H1 (cell line): ENCODE measurements at regions of chr5 and their contacts with region 1.

Region 1: DNA sequence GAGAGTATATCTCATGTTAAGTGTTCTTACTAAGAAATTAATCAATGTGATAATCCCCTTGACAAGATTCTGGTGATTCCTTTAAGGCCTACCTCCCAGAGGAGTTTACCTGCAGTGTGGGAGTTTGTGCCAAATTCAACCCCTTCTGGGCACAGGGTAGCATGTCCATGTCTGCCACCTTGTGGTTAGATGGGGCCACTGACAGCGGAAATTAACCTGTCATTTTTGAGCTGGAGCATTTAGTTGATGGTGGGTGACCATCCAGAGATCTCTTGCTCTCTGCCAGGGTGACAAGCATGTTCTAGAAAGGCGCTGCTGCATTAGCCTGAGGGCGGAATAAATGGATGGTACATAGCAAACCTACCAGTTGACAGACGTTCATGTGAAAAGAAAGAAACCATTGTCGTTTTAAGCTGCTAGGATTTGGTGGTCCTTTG is 132.2 kb downstream of the FBXO4 start:
- DNase-seq: peak; percentile 31 to 73
- H3K4me3 ChIP-seq: no peak overlapping the region
- H3K27ac ChIP-seq: no peak overlapping the region
- H3K4me1 ChIP-seq: no peaks in the 10 kb centered on the region
- H3K27me3 ChIP-seq: no peaks in the 10 kb centered on the region
- CTCF ChIP-seq: peak; percentile 82 to 88 (median 82)
- EP300 ChIP-seq: no peak
- POLR2A ChIP-seq: no peak
- RAD21 ChIP-seq: peak; percentile 83 to 91

Region 2: DNA sequence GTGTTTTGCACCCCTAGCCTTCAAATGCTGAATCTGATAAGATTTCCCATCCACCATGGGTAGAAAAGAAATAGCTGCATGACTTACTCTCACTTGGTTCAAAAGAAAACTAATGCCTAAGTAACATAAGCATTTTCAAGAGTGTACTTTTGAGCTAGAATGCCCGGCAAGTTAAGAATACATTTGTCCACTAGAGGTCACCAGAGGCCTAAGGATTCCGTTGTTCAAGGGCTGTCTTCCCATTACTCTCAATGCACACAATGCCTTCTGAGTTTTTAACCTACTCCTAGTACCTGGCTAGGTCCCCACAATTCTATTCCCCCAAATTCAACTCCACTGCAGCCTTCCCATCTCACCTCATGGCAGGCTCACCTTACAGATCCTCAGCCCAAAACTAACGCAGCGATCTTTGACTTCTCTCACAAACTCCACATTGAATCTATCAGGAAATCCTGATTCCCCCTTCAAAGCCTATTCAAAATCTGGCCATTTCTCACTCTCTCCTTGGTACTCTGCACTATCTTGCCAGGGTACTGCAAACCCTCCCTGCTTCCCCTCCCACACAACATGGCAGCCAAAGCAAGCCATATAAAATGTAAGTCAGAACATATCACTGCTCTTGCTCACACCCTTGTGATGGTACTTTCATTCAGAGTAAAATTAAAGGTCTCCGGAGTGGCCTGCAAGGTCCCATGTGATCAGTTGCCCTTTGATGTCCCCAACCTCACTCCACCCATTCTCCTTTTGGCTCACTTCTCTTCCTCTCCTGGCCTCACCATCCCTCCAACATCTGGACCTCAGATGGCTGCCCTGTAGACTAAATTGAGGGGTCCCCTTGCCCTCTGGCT is 200.4 kb before region 1 on chr5:
- CTCF ChIA-PET with region 1: interaction called, 56 read pairs
- POLR2A ChIA-PET with region 1: interaction called, 3 read pairs
- DNase-seq: peak in 1 of 2 experiments; percentile 60
- H3K4me3 ChIP-seq: no peak overlapping the region
- H3K27ac ChIP-seq: no peak overlapping the region
- H3K4me1 ChIP-seq: no peaks in the 10 kb centered on the region
- H3K27me3 ChIP-seq: peaks cover 0 to 2% (median 0%) of the 10 kb centered on the region in 4 experiments; a peak in 1 of 7 replicates
- CTCF ChIP-seq: peak in 2 of 3 experiments; percentile 70 to 73; a peak in 3 of 4 replicates
- EP300 ChIP-seq: no peak
- POLR2A ChIP-seq: no peak
- RAD21 ChIP-seq: peak; percentile 90 to 91

Region 3: DNA sequence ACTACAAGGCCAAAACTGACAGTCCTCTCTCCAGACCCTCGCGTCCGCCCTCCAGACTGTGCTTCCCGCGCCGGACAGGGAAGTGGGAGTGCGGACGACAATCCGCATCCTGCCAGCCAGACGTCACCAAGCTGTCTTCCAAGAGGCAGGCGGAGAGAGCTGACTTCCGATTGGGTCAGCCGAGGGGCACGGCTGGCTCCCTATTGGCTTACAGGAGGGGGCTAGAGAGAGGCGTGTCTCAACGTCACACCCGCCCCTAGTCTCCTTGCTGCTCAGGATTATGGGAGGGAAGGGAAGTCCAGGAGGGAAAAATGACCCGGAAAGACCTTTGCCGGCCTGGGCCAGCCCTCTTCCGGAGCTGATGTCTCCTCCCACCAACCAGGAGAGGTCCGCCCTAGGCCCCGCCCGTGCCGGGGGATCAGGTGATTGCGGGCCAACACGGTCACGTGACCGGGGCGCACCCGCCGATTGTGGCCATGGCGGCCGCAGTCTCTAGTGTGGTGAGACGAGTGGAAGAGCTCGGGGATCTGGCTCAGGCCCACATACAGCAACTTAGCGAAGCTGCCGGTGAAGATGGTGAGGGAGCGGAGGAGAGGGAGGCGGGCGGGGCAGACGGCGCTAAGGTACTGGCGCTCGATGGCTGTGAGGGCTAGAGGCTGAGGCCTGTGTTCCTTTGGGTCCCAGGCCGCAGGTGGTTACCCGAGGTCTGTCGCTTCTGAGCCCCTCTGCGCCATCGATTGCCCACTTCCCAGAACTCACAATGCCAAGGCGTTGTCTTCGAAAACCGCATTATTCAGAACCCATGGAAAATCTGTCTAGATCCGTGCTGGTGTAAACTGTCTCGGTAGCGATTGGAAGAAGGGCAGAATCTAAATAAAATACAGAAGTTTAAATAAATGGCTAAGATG is 153.1 kb before region 1 on chr5 and contains the start of gene RIMOC1:
- CTCF ChIA-PET with region 1: interaction called, 12 read pairs
- POLR2A ChIA-PET with region 1: no interaction called
- DNase-seq: peak; percentile 96 to 97
- H3K4me3 ChIP-seq: peak within 1 kb of the TSS; percentile 91 to 98 (median 94)
- H3K27ac ChIP-seq: peak within 1 kb of the TSS; percentile 92
- H3K4me1 ChIP-seq: no peaks in the 10 kb centered on the region; a peak in 1 of 7 replicates
- H3K27me3 ChIP-seq: no peaks in the 10 kb centered on the region; a peak in 1 of 7 replicates
- CTCF ChIP-seq: no peak
- EP300 ChIP-seq: peak in 1 of 2 experiments; percentile 22; a peak in 1 of 3 replicates
- POLR2A ChIP-seq: peak in 1 of 2 experiments; percentile 93; a peak in 2 of 3 replicates
- RAD21 ChIP-seq: no peak
- total RNA-seq, gene RIMOC1: 33.4 and 35.1 TPM in 2 replicates

Region 4: DNA sequence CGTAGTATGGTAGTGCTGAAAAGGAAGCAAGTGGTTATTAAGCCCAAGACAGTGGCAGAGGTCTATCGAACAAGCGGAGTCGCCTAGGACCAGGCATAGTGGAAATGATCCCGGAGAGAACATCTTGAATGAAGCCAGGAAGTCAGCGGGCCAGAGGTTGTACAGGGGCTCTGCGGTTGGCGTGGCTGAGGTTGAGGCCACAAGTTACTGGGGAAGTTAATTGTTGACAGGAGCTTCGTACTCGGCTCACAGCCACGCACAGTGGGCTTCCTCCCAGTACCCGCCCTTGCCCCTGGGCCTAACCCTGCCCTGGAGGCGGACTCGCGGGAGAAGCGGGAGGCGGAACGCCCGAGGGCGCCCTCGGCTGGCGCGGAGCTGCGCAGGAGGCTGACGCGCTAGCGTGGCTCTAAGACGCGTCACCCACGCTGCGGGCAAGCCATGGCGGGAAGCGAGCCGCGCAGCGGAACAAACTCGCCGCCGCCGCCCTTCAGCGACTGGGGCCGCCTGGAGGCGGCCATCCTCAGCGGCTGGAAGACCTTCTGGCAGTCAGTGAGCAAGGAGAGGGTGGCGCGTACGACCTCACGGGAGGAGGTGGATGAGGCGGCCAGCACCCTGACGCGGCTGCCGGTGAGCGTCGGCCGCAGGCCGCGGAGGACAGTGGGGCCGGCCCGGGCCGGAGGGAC is 132.3 kb before region 1 on chr5 and contains the start of gene FBXO4:
- CTCF ChIA-PET with region 1: interaction called, 17 read pairs
- POLR2A ChIA-PET with region 1: no interaction called
- DNase-seq: peak; percentile 15 to 68
- H3K4me3 ChIP-seq: peak within 1 kb of the TSS; percentile 25 to 70 (median 68)
- H3K27ac ChIP-seq: peak within 1 kb of the TSS; percentile 21; the same call in 1 of the 2 replicates
- H3K4me1 ChIP-seq: peaks cover 0 to 3% (median 0%) of the 10 kb centered on the region in 4 experiments; a peak in 2 of 7 replicates
- H3K27me3 ChIP-seq: no peaks in the 10 kb centered on the region
- CTCF ChIP-seq: peak; percentile 44 to 65 (median 57)
- EP300 ChIP-seq: no peak
- POLR2A ChIP-seq: peak; percentile 63 to 80
- RAD21 ChIP-seq: peak in 1 of 2 experiments; percentile 40; a peak in 2 of 4 replicates
- total RNA-seq, gene FBXO4: 0.57 and 0.88 TPM in 2 replicates

Region 5: GRCh38 chr5:41955432-41956024 is 101.7 kb before region 1 on chr5:
- CTCF ChIA-PET with region 1: no interaction called
- POLR2A ChIA-PET with region 1: no interaction called
- DNase-seq: no peak
- H3K4me3 ChIP-seq: no peak overlapping the region
- H3K27ac ChIP-seq: no peak overlapping the region
- H3K4me1 ChIP-seq: no peaks in the 10 kb centered on the region
- H3K27me3 ChIP-seq: no peaks in the 10 kb centered on the region
- CTCF ChIP-seq: no peak
- EP300 ChIP-seq: no peak
- POLR2A ChIP-seq: no peak
- RAD21 ChIP-seq: no peak

Region 6: DNA sequence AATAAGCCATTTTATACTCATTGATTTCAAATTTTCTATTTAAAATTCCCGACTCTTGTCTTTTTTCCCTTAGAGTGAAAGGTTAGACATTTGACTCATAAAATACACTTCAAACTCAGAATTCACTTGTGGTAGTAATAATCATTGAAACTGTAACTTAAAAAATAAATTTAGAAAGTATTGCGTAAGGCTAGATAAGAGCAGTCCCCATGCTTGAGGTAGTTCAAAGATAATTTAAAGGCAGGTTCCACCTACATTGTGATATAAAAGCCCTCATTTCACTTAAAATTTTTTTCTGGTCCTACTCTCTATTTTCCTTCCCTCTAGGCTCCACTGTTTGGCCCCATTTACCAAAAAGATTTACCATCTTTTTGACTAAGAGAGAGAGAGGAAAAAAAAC is 71.3 kb before region 1 on chr5:
- CTCF ChIA-PET with region 1: interaction called, 10 read pairs
- POLR2A ChIA-PET with region 1: no interaction called
- DNase-seq: no peak
- H3K4me3 ChIP-seq: no peak overlapping the region
- H3K27ac ChIP-seq: no peak overlapping the region
- H3K4me1 ChIP-seq: no peaks in the 10 kb centered on the region
- H3K27me3 ChIP-seq: no peaks in the 10 kb centered on the region
- CTCF ChIP-seq: no peak
- EP300 ChIP-seq: no peak
- POLR2A ChIP-seq: no peak
- RAD21 ChIP-seq: no peak

Region 7: DNA sequence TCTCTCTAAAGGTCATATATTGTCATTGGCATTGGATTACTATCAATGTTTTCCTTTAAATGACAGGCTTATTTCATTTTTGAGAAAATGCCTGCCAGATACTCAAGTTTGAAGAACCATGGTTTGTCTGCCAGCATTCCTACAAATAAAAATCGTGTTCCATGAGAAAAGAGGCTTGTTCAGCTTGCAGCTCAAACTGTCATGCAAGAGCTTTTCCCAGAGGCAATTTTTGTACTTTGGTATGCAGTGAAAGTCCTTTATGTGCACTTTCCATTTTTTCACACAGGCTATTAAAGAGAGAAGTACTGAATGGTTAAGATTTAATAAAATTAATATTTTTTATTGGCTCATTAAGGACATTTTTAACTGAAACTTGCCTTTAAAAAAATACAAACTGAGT is 21.7 kb before region 1 on chr5:
- CTCF ChIA-PET with region 1: interaction called, 19 read pairs
- POLR2A ChIA-PET with region 1: no interaction called
- DNase-seq: no peak
- H3K4me3 ChIP-seq: no peak overlapping the region
- H3K27ac ChIP-seq: no peak overlapping the region
- H3K4me1 ChIP-seq: no peaks in the 10 kb centered on the region
- H3K27me3 ChIP-seq: no peaks in the 10 kb centered on the region
- CTCF ChIP-seq: no peak
- EP300 ChIP-seq: no peak
- POLR2A ChIP-seq: no peak
- RAD21 ChIP-seq: no peak

Region 8: DNA sequence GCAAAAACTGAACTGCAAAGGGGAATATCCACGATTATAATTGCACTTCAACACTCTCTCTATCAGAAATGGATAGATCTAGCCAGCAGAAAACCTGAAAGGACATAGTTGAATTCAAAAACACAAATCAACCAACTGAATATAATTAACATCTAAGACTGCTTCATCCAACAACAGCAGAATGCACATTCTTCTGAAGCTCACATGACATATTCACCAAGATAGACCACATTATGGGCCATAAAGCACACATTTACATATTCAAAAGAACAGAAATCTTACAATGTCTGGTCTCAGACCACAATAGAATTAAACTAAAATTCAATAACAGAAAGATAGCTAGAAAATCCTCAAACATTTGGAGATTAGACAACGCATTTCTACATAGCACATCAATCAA is 13.9 kb before region 1 on chr5:
- CTCF ChIA-PET with region 1: interaction called, 19 read pairs
- POLR2A ChIA-PET with region 1: no interaction called
- DNase-seq: no peak
- H3K4me3 ChIP-seq: no peak overlapping the region
- H3K27ac ChIP-seq: no peak overlapping the region
- H3K4me1 ChIP-seq: no peaks in the 10 kb centered on the region
- H3K27me3 ChIP-seq: no peaks in the 10 kb centered on the region
- CTCF ChIP-seq: no peak
- EP300 ChIP-seq: no peak
- POLR2A ChIP-seq: no peak
- RAD21 ChIP-seq: no peak